MCF 10A (cell line): ENCODE measurements at regions of chr6 and their contacts with region 1.

Region 1: GRCh38 chr6:35955976-35956375 is 35.1 kb upstream of the SRPK1 start:
- DNase-seq: peak; percentile 11
- H3K4me3 Mint-ChIP-seq: no peak overlapping the region
- H3K27ac Mint-ChIP-seq: no peak overlapping the region
- H3K4me1 Mint-ChIP-seq: peaks cover 40% of the 10 kb centered on the region
- H3K27me3 Mint-ChIP-seq: peaks cover 27% of the 10 kb centered on the region
- CTCF ChIP-seq: peak; percentile 28

Region 2: GRCh38 chr6:35970181-35970580 is 14.2 kb after region 1 on chr6:
- CTCF ChIA-PET with region 1: no interaction called
- POLR2A ChIA-PET with region 1: interaction called, 10 read pairs
- intact Hi-C with region 1: no loop called
- DNase-seq: peak; percentile 48
- H3K4me3 Mint-ChIP-seq: no peak overlapping the region
- H3K27ac Mint-ChIP-seq: no peak overlapping the region
- H3K4me1 Mint-ChIP-seq: peaks cover 5% of the 10 kb centered on the region
- H3K27me3 Mint-ChIP-seq: no peaks in the 10 kb centered on the region
- CTCF ChIP-seq: no peak